Naive thymus-derived CD4-positive, alpha-beta T cell (primary cell): ENCODE measurements at regions of chr10 and their contacts with region 1.

Region 1: GRCh38 chr10:12348870-12349628 is at the start of gene CAMK1D:
- DNase-seq: peak; percentile 83 to 92 (median 90)
- ATAC-seq: peak; percentile 84
- H3K4me3 ChIP-seq: peak within 1 kb of the TSS; percentile 83
- H3K4me3 Mint-ChIP-seq: peak within 1 kb of the TSS; percentile 78 to 99 (median 97)
- H3K27ac ChIP-seq: peak within 1 kb of the TSS; percentile 89
- H3K27ac Mint-ChIP-seq: peak within 1 kb of the TSS; percentile 86 to 99 (median 97)
- H3K4me1 ChIP-seq: peaks cover 18 to 19% of the 10 kb centered on the region in 2 donors
- H3K4me1 Mint-ChIP-seq: peaks cover 23 to 51% (median 42%) of the 10 kb centered on the region in 7 donors
- H3K27me3 ChIP-seq: no peaks in the 10 kb centered on the region
- H3K27me3 Mint-ChIP-seq: peaks cover 0 to 64% (median 0%) of the 10 kb centered on the region in 5 donors
- total RNA-seq, gene CAMK1D: 12.5 to 43.2 (median 18.7) TPM

Region 2: DNA sequence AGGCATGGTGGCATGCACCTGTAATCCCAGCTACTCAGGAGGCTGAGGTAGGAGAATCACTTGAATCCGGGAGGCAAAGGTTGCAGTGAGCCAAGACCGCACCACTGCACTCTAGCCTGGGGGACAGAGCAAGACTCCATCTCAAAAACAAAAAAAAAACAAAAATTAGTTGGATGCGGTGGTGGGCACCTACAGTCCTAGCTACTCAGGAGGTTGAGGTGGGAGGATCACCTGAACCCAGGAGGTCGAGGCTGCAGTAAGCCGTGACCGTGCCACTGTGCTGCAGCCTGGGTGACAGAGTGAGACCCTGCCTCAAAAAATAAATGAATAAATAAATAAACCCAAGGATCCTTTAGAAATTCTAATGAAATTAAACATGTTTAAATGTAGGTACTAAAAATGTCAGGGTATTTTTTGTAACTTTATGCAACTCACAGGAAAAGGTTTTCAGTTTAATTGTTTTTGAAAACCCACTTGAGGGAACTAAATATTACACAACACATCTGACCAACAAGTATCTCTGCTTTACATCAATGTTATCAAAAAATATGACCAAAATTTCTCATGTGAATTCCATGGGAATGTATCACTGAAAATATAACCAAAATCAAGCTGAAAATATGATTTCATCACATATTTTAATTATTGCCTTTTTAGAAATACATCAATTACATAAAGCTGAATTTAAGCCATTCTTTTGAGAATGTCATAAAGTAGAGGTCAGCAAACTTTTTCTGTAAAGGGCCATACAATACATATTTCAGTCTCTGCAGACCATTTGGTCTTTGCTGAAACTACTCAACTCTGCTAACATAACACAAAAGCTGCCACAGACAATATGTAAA is 330.4 kb before region 1 on chr10:
- CTCF ChIA-PET with region 1: no interaction called
- POLR2A ChIA-PET with region 1: no interaction called
- intact Hi-C with region 1: no loop called
- DNase-seq: no peak
- ATAC-seq: no peak
- H3K4me3 ChIP-seq: no peak overlapping the region
- H3K4me3 Mint-ChIP-seq: no peak overlapping the region
- H3K27ac ChIP-seq: no peak overlapping the region
- H3K27ac Mint-ChIP-seq: peak overlapping the region in 3 of 9 donors; percentile 37 to 40 (median 38)
- H3K4me1 ChIP-seq: peaks cover 0 to 3% of the 10 kb centered on the region in 2 donors
- H3K4me1 Mint-ChIP-seq: peaks cover 16 to 40% (median 25%) of the 10 kb centered on the region in 7 donors
- H3K27me3 ChIP-seq: no peaks in the 10 kb centered on the region
- H3K27me3 Mint-ChIP-seq: no peaks in the 10 kb centered on the region

Region 3: GRCh38 chr10:12042797-12043651 is 306.0 kb before region 1 on chr10 and contains the start of gene UPF2:
- CTCF ChIA-PET with region 1: no interaction called
- POLR2A ChIA-PET with region 1: no interaction called
- intact Hi-C with region 1: loop called (anchors 1 to 10 kb)
- DNase-seq: peak; percentile 95 to 98 (median 97)
- ATAC-seq: peak; percentile 93
- H3K4me3 ChIP-seq: peak within 1 kb of the TSS; percentile 83
- H3K4me3 Mint-ChIP-seq: peak within 1 kb of the TSS; percentile 87 to 100 (median 95)
- H3K27ac ChIP-seq: peak within 1 kb of the TSS; percentile 92
- H3K27ac Mint-ChIP-seq: peak within 1 kb of the TSS; percentile 98 to 100 (median 99)
- H3K4me1 ChIP-seq: peaks cover 10 to 16% of the 10 kb centered on the region in 2 donors
- H3K4me1 Mint-ChIP-seq: peaks cover 13 to 47% (median 40%) of the 10 kb centered on the region in 7 donors
- H3K27me3 ChIP-seq: no peaks in the 10 kb centered on the region
- H3K27me3 Mint-ChIP-seq: peaks cover 0 to 3% (median 0%) of the 10 kb centered on the region in 5 donors
- total RNA-seq, gene UPF2: 27.2 to 40.5 (median 36.3) TPM

Region 4: GRCh38 chr10:12264204-12264940 is 84.7 kb before region 1 on chr10:
- CTCF ChIA-PET with region 1: interaction called, 6 read pairs
- POLR2A ChIA-PET with region 1: no interaction called
- intact Hi-C with region 1: loop called (anchors 1 to 5 kb)
- DNase-seq: peak; percentile 45 to 75 (median 67)
- ATAC-seq: peak; percentile 73
- H3K4me3 ChIP-seq: peak overlapping the region; percentile 45
- H3K4me3 Mint-ChIP-seq: peak overlapping the region; percentile 58 to 81 (median 72)
- H3K27ac ChIP-seq: no peak overlapping the region
- H3K27ac Mint-ChIP-seq: peak overlapping the region in 7 of 9 donors; percentile 10 to 87 (median 51)
- H3K4me1 ChIP-seq: no peaks in the 10 kb centered on the region
- H3K4me1 Mint-ChIP-seq: peaks cover 0 to 26% (median 5%) of the 10 kb centered on the region in 7 donors
- H3K27me3 ChIP-seq: no peaks in the 10 kb centered on the region
- H3K27me3 Mint-ChIP-seq: no peaks in the 10 kb centered on the region

Region 5: DNA sequence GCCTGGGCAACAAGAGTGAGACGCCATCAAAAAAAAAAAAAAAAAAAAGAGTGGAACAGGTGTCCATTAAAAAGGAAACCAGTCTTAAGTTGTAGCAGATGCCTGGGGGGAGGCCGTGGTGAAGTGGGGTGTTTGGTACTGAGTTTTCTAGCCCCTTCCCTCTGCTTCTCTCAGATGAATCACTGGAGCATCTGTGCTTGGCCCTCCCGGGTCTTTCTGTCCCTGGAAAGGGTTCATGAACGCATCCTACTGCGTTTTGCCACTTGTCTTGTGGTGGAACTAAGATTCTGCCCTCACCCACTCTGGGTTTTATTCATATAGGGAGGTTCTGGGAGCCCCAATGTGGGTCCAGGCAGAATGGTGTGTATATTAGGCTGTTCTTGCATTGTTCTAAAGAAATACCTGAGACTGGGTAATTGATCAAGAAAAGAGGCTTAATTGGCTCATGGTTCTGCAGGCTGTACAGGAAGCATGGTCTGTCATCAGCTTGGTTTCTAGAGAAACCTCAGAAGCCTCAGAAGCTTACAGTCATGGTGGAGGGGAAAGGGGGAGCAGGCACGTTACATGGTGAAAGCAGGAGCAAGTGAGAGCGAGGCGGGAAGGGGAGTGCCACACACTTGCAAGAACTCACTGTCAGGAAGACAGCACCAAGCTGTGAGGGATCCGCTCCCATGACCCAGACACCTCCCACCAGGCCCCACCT is 63.8 kb after region 1 on chr10:
- CTCF ChIA-PET with region 1: no interaction called
- POLR2A ChIA-PET with region 1: no interaction called
- intact Hi-C with region 1: loop called in 1 of 2 experiments (anchors 5 kb)
- DNase-seq: peak in 6 of 9 donors; percentile 15 to 51 (median 31)
- ATAC-seq: peak; percentile 74
- H3K4me3 ChIP-seq: no peak overlapping the region
- H3K4me3 Mint-ChIP-seq: peak overlapping the region in 4 of 10 donors; percentile 1 to 3 (median 2)
- H3K27ac ChIP-seq: no peak overlapping the region
- H3K27ac Mint-ChIP-seq: peak overlapping the region in 6 of 9 donors; percentile 0 to 68 (median 18)
- H3K4me1 ChIP-seq: peaks cover 0 to 15% of the 10 kb centered on the region in 2 donors
- H3K4me1 Mint-ChIP-seq: peaks cover 15 to 70% (median 52%) of the 10 kb centered on the region in 7 donors
- H3K27me3 ChIP-seq: no peaks in the 10 kb centered on the region
- H3K27me3 Mint-ChIP-seq: no peaks in the 10 kb centered on the region

Region 6: DNA sequence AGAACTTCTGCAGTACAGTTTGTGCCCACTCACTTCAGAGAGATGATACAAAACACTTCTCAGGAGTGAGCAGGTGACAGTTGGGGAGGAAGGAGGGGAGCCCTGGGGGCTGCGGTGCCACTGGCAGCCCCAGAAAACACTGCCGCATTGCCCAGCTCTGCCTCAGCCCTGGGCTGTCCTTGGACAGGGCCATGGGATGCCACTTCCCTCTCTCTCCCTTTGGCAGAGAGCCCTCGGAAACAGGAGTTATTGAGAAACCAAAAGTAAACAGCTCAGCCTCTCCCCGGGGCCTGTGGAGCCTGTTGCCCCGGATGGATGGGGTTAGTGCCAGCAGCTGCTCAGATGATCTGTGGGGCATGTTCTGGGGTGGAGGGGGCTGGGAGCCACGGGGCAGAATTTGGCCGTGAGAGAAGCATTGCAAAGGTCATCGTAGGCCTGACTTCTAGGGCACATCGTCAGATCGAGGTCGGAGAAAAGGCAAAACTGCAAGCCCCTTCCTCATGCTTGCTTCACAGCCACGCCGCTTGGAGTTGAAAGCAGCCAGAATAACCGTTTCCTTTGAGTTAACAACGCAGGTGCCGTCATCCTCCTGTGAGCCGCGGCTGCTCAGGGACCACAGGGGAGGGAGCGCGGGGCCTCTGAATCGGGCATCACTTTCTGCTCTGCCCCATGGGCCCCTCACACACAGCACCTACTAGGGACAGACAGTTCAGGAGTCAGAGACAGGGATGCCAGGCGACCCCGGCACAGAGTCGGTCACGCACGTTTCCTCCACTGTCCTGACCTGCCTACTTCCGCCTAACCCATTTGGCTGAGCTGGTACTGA is 256.7 kb after region 1 on chr10:
- CTCF ChIA-PET with region 1: no interaction called
- POLR2A ChIA-PET with region 1: interaction called, 4 read pairs
- intact Hi-C with region 1: loop called in 1 of 2 experiments (anchors 1 kb)
- DNase-seq: peak; percentile 45 to 80 (median 73)
- ATAC-seq: peak; percentile 87
- H3K4me3 ChIP-seq: peak overlapping the region; percentile 67
- H3K4me3 Mint-ChIP-seq: peak overlapping the region; percentile 78 to 94 (median 89)
- H3K27ac ChIP-seq: peak overlapping the region; percentile 81
- H3K27ac Mint-ChIP-seq: peak overlapping the region; percentile 93 to 100 (median 98)
- H3K4me1 ChIP-seq: peaks cover 9 to 14% of the 10 kb centered on the region in 2 donors
- H3K4me1 Mint-ChIP-seq: peaks cover 10 to 62% (median 41%) of the 10 kb centered on the region in 7 donors
- H3K27me3 ChIP-seq: no peaks in the 10 kb centered on the region
- H3K27me3 Mint-ChIP-seq: no peaks in the 10 kb centered on the region

Region 7: DNA sequence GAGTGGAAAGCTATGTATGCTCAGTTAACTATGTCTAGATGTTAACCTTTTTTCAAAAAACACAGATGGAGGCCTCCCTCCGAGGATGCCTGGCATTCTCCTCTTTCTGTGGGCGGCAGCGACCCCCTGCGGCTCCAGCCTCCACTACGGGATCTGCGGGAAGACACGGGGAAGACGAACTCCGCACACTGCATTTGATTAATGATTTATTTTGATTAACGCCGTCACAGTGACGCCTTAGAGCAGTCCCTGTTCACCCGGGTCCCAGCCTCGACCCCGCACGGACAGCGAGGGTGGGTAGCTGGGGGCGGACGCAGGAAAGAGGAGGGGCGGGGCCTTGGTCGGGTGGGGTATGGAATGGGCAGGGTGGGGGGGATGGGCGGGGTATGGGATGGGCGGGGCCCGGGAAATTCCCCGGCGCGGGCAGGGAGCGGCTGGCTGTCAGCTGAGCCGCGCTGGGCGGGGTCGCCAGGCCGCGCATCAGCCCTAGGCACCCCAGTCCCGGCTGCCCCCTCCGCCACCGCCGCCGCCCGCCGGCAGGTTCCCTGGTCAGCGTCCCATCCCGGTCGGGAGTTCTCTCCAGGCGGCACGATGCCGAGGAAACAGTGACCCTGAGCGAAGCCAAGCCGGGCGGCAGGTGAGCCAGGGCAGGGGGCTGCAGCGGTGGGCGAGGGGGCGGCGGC is 750.8 kb after region 1 on chr10 and contains the start of gene OPTN:
- CTCF ChIA-PET with region 1: no interaction called
- POLR2A ChIA-PET with region 1: no interaction called
- intact Hi-C with region 1: loop called in 1 of 2 experiments (anchors 10 kb)
- DNase-seq: peak; percentile 61 to 85 (median 80)
- ATAC-seq: peak; percentile 90
- H3K4me3 ChIP-seq: peak within 1 kb of the TSS; percentile 82
- H3K4me3 Mint-ChIP-seq: peak within 1 kb of the TSS; percentile 83 to 97 (median 96)
- H3K27ac ChIP-seq: peak within 1 kb of the TSS; percentile 92
- H3K27ac Mint-ChIP-seq: peak within 1 kb of the TSS; percentile 88 to 98 (median 94)
- H3K4me1 ChIP-seq: peaks cover 6 to 21% of the 10 kb centered on the region in 2 donors
- H3K4me1 Mint-ChIP-seq: peaks cover 28 to 52% (median 49%) of the 10 kb centered on the region in 7 donors
- H3K27me3 ChIP-seq: no peaks in the 10 kb centered on the region
- H3K27me3 Mint-ChIP-seq: no peaks in the 10 kb centered on the region
- total RNA-seq, gene OPTN: 59.3 to 146 (median 60.0) TPM